Calu3 (cell line): ENCODE measurements at regions of chr1 and their contacts with region 1.

Region 1: DNA sequence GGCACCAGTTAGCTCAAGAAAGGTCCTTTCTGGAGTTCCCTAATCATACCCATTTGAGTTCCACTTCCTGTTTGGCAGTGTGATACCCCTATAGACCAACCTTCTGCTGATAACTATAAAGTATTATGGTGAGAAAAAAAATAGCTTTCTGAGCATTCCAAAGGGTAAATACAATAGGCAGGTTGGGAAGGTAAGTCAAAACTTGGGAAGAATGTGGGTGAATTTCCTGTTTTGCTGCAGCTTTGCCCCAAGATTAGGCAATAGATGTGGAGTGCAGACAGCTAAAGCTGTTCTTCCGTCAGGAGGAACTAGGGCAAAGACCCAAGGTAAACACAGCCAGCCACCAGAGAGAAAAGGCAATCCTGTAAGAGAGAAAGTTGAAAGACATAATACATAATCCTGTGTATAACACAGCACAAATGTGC is 49.9 kb upstream of the GUCA2A start:
- DNase-seq: peak; percentile 54
- H3K4me3 Mint-ChIP-seq: peak overlapping the region; percentile 25
- H3K27ac Mint-ChIP-seq: peak overlapping the region; percentile 69
- H3K4me1 Mint-ChIP-seq: peaks cover 67% of the 10 kb centered on the region
- H3K27me3 Mint-ChIP-seq: no peaks in the 10 kb centered on the region
- CTCF ChIP-seq: no peak

Region 2: DNA sequence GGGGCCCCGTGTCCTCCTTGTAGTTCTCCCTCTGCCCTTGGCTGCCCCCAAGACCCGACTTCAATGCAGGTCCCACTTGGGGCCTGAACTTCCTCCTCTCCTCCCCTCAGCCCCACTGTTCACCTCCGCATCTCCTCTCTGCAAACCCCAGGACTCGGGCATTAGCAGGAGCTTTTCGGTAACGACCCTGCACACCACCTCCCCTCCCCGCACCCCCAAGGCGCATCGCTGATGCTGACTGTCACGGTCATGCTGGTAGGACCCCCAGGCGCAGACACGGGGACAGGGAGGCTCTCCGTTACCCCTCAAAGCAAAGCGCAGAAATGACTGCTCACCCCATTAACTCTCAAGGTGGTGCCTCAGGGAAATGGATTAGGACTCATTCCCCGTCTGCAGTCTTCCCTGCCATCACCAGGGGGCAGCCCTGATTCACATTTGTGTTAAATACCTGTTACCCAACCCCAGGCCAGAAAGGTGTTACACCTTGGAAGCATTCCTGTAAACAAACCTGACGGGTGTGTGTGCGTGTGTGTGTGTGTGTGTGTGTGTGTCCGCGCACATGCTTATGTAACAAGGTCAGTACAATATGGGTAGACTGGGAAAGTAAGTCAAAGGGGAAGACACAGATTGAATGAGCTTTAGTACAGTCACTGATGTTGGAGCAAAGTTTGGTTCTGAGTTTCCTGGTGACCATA is 67.7 kb before region 1 on chr1:
- CTCF ChIA-PET with region 1: no interaction called
- intact Hi-C with region 1: no loop called
- DNase-seq: peak; percentile 91
- H3K4me3 Mint-ChIP-seq: no peak overlapping the region
- H3K27ac Mint-ChIP-seq: no peak overlapping the region
- H3K4me1 Mint-ChIP-seq: peaks cover 7% of the 10 kb centered on the region
- H3K27me3 Mint-ChIP-seq: peaks cover 49% of the 10 kb centered on the region
- CTCF ChIP-seq: peak; percentile 88

Region 3: GRCh38 chr1:42157667-42158066 is 56.8 kb before region 1 on chr1:
- CTCF ChIA-PET with region 1: no interaction called
- intact Hi-C with region 1: no loop called
- DNase-seq: no peak
- H3K4me3 Mint-ChIP-seq: no peak overlapping the region
- H3K27ac Mint-ChIP-seq: no peak overlapping the region
- H3K4me1 Mint-ChIP-seq: peaks cover 14% of the 10 kb centered on the region
- H3K27me3 Mint-ChIP-seq: peaks cover 10% of the 10 kb centered on the region
- CTCF ChIP-seq: no peak

Region 4: GRCh38 chr1:42266253-42267135 is 52.0 kb after region 1 on chr1:
- CTCF ChIA-PET with region 1: interaction called, 3 read pairs
- intact Hi-C with region 1: loop called (anchors 10 kb)
- DNase-seq: peak; percentile 29
- H3K4me3 Mint-ChIP-seq: no peak overlapping the region
- H3K27ac Mint-ChIP-seq: no peak overlapping the region
- H3K4me1 Mint-ChIP-seq: peaks cover 32% of the 10 kb centered on the region
- H3K27me3 Mint-ChIP-seq: no peaks in the 10 kb centered on the region
- CTCF ChIP-seq: no peak

Region 5: GRCh38 chr1:42319871-42320484 is 105.5 kb after region 1 on chr1:
- CTCF ChIA-PET with region 1: no interaction called
- intact Hi-C with region 1: loop called (anchors 10 kb)
- DNase-seq: no peak
- H3K4me3 Mint-ChIP-seq: no peak overlapping the region
- H3K27ac Mint-ChIP-seq: no peak overlapping the region
- H3K4me1 Mint-ChIP-seq: peaks cover 58% of the 10 kb centered on the region
- H3K27me3 Mint-ChIP-seq: no peaks in the 10 kb centered on the region
- CTCF ChIP-seq: no peak

Region 6: DNA sequence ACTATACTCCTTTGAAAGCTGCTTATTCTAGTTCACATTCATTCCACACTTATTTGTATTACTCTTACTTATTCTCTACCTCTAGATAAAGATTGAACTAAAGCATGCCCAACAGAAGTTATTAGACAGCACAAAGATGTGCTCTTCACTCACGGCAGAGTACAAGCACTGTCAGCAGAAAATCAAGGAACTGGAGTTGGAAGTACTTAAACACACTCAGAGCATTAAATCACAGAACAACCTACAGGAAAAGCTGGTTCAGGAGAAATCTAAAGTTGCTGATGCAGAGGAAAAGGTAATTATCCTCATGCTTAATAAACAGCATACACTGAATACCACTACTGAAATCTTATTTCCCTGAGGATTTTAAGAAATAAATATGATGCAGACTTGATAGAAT is 362.5 kb after region 1 on chr1:
- CTCF ChIA-PET with region 1: no interaction called
- intact Hi-C with region 1: no loop called
- DNase-seq: no peak
- H3K4me3 Mint-ChIP-seq: no peak overlapping the region
- H3K27ac Mint-ChIP-seq: no peak overlapping the region
- H3K4me1 Mint-ChIP-seq: no peaks in the 10 kb centered on the region
- H3K27me3 Mint-ChIP-seq: no peaks in the 10 kb centered on the region
- CTCF ChIP-seq: no peak